WTC11 (cell line): ENCODE measurements at regions of chr1 and their contacts with region 1.

Region 1: GRCh38 chr1:230642263-230642959 is at the start of gene COG2:
- DNase-seq: peak; percentile 99
- ATAC-seq: peak; percentile 94
- H3K4me3 Mint-ChIP-seq: peak within 1 kb of the TSS; percentile 100
- H3K27ac Mint-ChIP-seq: peak within 1 kb of the TSS; percentile 97
- H3K4me1 Mint-ChIP-seq: peaks cover 24% of the 10 kb centered on the region
- H3K27me3 Mint-ChIP-seq: peaks cover 4% of the 10 kb centered on the region
- CTCF ChIP-seq: peak; percentile 99
- total RNA-seq, gene COG2: 30.9 to 32.0 TPM (median 31.1 TPM) in 3 replicates

Region 2: DNA sequence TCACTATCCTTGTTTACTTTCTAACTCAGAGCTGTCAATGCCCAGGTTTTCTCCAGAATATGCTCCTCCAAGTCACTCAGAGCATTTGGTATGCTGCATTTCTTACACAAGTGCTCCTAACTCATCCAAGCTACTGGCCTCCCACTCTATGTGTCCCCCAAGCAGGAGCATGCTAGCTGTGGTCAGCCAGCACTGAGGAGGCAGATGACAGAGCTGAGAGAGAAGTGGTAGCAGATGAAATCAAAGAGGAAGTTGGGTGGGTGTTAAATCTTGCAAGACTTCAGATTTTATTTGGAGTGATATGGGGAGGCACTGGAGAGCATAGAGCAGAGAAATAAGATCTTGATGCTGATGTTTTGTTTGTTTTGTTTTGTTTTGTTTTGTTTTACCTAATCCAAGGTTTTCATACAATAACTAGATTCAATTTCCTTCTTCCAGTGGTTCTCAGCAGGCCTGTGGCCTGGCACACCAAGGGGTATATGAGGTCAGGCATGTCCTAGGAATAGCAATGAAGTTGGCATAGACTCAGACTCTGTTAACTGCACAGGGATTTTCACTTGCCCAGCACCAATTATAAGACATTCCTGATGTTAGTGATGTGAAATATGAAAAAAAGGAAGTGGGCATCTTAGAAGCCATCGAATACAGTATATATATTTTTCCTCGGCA is 213.2 kb before region 1 on chr1:
- CTCF ChIA-PET with region 1: interaction called, 13 read pairs
- POLR2A ChIA-PET with region 1: no interaction called
- DNase-seq: no peak
- ATAC-seq: no peak
- H3K4me3 Mint-ChIP-seq: 0 out of 2 replicates have a peak overlapping the region, but pooled peaks have one; percentile 14
- H3K27ac Mint-ChIP-seq: peak overlapping the region; percentile 82
- H3K4me1 Mint-ChIP-seq: peaks cover 31% of the 10 kb centered on the region
- H3K27me3 Mint-ChIP-seq: peaks cover 11% of the 10 kb centered on the region
- CTCF ChIP-seq: no peak

Region 3: GRCh38 chr1:230568008-230568407 is 74.4 kb before region 1 on chr1:
- CTCF ChIA-PET with region 1: interaction called, 13 read pairs
- POLR2A ChIA-PET with region 1: no interaction called
- DNase-seq: peak; percentile 44
- ATAC-seq: peak; percentile 95
- H3K4me3 Mint-ChIP-seq: no peak overlapping the region
- H3K27ac Mint-ChIP-seq: no peak overlapping the region
- H3K4me1 Mint-ChIP-seq: peaks cover 11% of the 10 kb centered on the region
- H3K27me3 Mint-ChIP-seq: no peaks in the 10 kb centered on the region
- CTCF ChIP-seq: peak; percentile 17; the same call in 1 of the 2 replicates

Region 4: GRCh38 chr1:230581446-230582079 is 60.8 kb before region 1 on chr1:
- CTCF ChIA-PET with region 1: interaction called, 22 read pairs
- POLR2A ChIA-PET with region 1: no interaction called
- DNase-seq: peak; percentile 63
- ATAC-seq: peak; percentile 88
- H3K4me3 Mint-ChIP-seq: peak overlapping the region; percentile 42
- H3K27ac Mint-ChIP-seq: no peak overlapping the region
- H3K4me1 Mint-ChIP-seq: peaks cover 27% of the 10 kb centered on the region
- H3K27me3 Mint-ChIP-seq: peaks cover 22% of the 10 kb centered on the region
- CTCF ChIP-seq: no peak

Region 5: DNA sequence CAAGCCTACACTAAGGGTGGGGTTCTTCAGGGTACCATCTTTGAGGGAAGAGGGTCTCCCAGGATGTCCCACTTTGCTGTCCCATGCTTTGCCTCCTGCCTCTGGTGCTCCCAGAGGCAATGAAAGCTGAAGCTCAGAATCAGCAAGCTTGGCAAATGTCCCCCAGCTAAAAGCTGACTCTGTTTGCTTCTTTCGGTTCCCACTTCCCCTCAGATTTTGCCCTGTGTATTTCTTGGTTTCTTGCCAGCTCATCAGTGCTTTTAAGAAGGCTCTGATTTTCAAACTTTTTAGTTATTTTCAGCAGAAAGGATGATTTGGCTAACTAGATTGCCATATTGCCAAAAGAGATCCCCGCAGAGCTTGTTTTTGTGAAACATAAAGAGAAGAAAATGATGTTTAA is 33.2 kb before region 1 on chr1:
- CTCF ChIA-PET with region 1: interaction called, 30 read pairs
- POLR2A ChIA-PET with region 1: no interaction called
- DNase-seq: no peak
- ATAC-seq: no peak
- H3K4me3 Mint-ChIP-seq: no peak overlapping the region
- H3K27ac Mint-ChIP-seq: peak overlapping the region; percentile 57; the same call in 1 of the 2 replicates
- H3K4me1 Mint-ChIP-seq: peaks cover 4% of the 10 kb centered on the region
- H3K27me3 Mint-ChIP-seq: no peaks in the 10 kb centered on the region
- CTCF ChIP-seq: no peak

Region 6: GRCh38 chr1:230753586-230754251 is 111.3 kb after region 1 on chr1:
- CTCF ChIA-PET with region 1: interaction called, 22 read pairs
- POLR2A ChIA-PET with region 1: interaction called, 3 read pairs
- DNase-seq: peak; percentile 73
- ATAC-seq: peak; percentile 84
- H3K4me3 Mint-ChIP-seq: peak overlapping the region; percentile 58
- H3K27ac Mint-ChIP-seq: peak overlapping the region; percentile 92
- H3K4me1 Mint-ChIP-seq: peaks cover 47% of the 10 kb centered on the region
- H3K27me3 Mint-ChIP-seq: peaks cover 3% of the 10 kb centered on the region; the same call in 1 of the 2 replicates
- CTCF ChIP-seq: no peak